Calu3 (cell line): ENCODE measurements at regions of chr3 and their contacts with region 1.

Region 1: GRCh38 chr3:180048103-180048502 is 11.4 kb upstream of the PEX5L start:
- DNase-seq: no peak
- H3K4me3 Mint-ChIP-seq: no peak overlapping the region
- H3K27ac Mint-ChIP-seq: no peak overlapping the region
- H3K4me1 Mint-ChIP-seq: peaks cover 23% of the 10 kb centered on the region
- H3K27me3 Mint-ChIP-seq: peaks cover 30% of the 10 kb centered on the region
- CTCF ChIP-seq: no peak

Region 2: DNA sequence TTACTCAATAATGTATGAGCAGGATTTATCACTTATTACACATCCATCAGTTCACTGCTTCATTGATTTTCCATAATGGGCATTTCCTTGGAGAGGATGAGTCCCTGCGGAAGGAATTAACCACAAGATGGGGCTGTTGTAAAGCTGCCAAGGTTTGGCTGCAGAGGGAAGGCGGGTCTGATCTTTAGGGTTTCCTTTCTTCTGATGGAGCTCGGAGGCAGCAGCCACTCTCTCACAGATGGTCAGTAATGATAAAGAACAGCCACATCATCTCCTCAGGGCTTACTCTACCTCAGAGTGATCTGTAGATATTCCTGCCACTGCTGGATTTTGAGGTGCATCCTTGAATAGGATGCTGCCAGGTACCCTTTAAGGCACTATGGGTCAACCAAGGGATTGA is 280.0 kb before region 1 on chr3:
- CTCF ChIA-PET with region 1: no interaction called
- intact Hi-C with region 1: no loop called
- DNase-seq: peak; percentile 53
- H3K4me3 Mint-ChIP-seq: no peak overlapping the region
- H3K27ac Mint-ChIP-seq: no peak overlapping the region
- H3K4me1 Mint-ChIP-seq: no peaks in the 10 kb centered on the region
- H3K27me3 Mint-ChIP-seq: no peaks in the 10 kb centered on the region
- CTCF ChIP-seq: peak; percentile 48

Region 3: GRCh38 chr3:179956416-179956830 is 91.7 kb before region 1 on chr3:
- CTCF ChIA-PET with region 1: no interaction called
- intact Hi-C with region 1: no loop called
- DNase-seq: no peak
- H3K4me3 Mint-ChIP-seq: no peak overlapping the region
- H3K27ac Mint-ChIP-seq: no peak overlapping the region
- H3K4me1 Mint-ChIP-seq: peaks cover 8% of the 10 kb centered on the region
- H3K27me3 Mint-ChIP-seq: no peaks in the 10 kb centered on the region
- CTCF ChIP-seq: no peak

Region 4: DNA sequence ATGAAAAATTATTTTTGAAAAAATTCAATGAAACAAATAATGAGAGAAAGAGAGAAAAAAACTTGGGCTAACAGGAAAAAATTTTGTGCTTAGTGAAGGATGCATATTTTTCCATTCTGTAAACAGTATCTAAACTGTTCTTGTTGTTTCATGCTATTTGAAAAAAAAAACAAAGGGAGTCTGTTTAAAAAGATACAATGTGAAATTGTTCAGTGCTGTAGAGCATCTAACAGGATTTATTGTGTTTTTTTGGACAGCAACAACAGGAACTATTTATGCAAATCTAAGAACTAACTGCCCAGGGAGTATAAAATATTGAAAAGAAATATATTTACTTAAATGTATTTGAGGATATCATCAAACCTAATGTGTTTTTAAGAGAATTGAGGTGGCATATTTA is 66.5 kb before region 1 on chr3:
- CTCF ChIA-PET with region 1: no interaction called
- intact Hi-C with region 1: no loop called
- DNase-seq: no peak
- H3K4me3 Mint-ChIP-seq: no peak overlapping the region
- H3K27ac Mint-ChIP-seq: no peak overlapping the region
- H3K4me1 Mint-ChIP-seq: no peaks in the 10 kb centered on the region
- H3K27me3 Mint-ChIP-seq: no peaks in the 10 kb centered on the region
- CTCF ChIP-seq: no peak

Region 5: DNA sequence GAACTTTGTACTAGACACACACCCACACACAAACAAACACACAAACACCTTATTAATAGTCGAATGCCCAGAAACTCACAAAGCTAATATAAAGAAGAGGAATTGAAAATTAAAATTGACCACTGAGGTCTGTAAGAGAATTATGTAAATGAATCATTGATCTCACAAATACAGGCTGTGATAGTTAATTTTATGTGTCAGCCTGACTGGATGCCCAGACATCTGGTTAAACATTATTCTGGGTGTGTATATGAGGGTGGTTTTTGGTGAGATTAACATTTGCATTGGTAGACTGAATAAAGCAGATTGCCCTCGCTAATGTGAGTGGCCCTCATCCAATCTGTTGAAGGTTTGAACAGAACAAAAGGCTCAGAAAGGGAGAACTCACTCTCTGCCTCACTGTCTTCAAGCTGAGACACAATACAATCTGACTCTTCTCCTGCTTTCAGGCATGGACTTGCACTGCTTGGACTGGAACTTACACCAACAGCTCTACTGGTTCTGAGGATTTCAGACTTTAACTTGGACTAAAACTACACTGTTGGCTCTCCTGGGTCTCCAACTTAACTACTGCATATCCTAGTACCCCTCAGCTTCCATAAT is 354.5 kb after region 1 on chr3:
- CTCF ChIA-PET with region 1: no interaction called
- intact Hi-C with region 1: loop called (anchors 5 kb)
- DNase-seq: peak; percentile 22
- H3K4me3 Mint-ChIP-seq: peak overlapping the region; percentile 7
- H3K27ac Mint-ChIP-seq: peak overlapping the region; percentile 35
- H3K4me1 Mint-ChIP-seq: peaks cover 52% of the 10 kb centered on the region
- H3K27me3 Mint-ChIP-seq: no peaks in the 10 kb centered on the region
- CTCF ChIP-seq: no peak

Region 6: GRCh38 chr3:180601688-180602666 is 553.9 kb after region 1 on chr3 and contains the start of gene TTC14:
- CTCF ChIA-PET with region 1: no interaction called
- intact Hi-C with region 1: loop called (anchors 1 kb)
- DNase-seq: peak; percentile 96
- H3K4me3 Mint-ChIP-seq: peak within 1 kb of the TSS; percentile 100
- H3K27ac Mint-ChIP-seq: peak within 1 kb of the TSS; percentile 95
- H3K4me1 Mint-ChIP-seq: peaks cover 10% of the 10 kb centered on the region
- H3K27me3 Mint-ChIP-seq: no peaks in the 10 kb centered on the region
- CTCF ChIP-seq: no peak
- total RNA-seq, gene TTC14: 48.4 and 51.6 TPM in 2 replicates